ENCODE measurements at regions of chr1 and their contacts with region 1.

Region 1: DNA sequence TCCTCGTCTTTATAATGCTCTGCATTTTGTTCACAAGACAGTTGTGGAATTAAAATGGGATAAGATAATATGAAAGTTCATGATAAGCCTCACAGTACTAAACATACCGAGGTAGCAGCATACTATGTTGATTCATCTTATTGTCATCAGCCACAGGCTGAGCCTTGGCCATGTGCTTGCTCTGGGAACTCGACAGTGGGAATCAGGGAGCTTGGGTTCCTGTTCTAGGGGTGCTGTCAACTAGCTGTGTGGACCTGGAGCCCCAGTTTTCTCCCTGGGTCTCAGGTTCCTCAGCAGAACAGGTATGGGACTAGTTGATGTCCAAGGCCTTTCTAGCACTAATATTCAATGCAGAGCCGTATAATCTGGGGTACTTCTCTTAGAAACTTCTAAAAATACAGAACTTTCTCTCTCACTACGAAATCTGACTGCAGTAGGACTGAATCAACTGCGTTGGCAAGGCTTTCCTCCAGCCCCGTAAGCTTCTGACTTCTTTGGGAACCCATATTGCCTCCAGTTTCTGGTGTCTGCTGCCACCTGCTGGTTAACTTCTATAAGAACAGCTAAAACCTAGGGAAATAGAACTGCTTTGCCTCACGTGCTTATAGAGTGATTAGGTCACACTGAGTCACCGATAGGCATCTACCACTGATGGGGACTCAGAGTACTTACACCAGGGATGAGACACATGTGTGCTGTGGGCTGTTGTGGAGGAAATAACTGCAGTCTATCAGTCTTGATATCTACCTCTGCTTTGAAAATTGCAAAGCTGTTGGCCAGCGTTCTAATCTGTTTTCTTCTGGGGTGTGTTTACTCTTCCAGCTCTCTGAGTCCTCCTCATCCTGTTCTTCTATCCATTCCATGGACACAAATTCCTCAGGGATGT is 110.9 kb downstream of the RGL1 start:
- DNase-seq: peak; percentile 83
- H3K4me3 Mint-ChIP-seq: no peak overlapping the region
- H3K27ac Mint-ChIP-seq: peak overlapping the region; percentile 46
- H3K4me1 Mint-ChIP-seq: peaks cover 13% of the 10 kb centered on the region
- H3K27me3 Mint-ChIP-seq: no peaks in the 10 kb centered on the region

Region 2: GRCh38 chr1:183635606-183636333 is 280.1 kb before region 1 on chr1 and contains the start of gene ARPC5:
- CTCF ChIA-PET with region 1: interaction called, 13 read pairs
- POLR2A ChIA-PET with region 1: interaction called, 4 read pairs
- intact Hi-C with region 1: loop called (anchors 1 kb)
- DNase-seq: peak; percentile 98
- H3K4me3 Mint-ChIP-seq: peak within 1 kb of the TSS; percentile 95
- H3K27ac Mint-ChIP-seq: peak within 1 kb of the TSS; percentile 99
- H3K4me1 Mint-ChIP-seq: peaks cover 33% of the 10 kb centered on the region
- H3K27me3 Mint-ChIP-seq: no peaks in the 10 kb centered on the region
- total RNA-seq, gene ARPC5: 158 to 161 TPM

Region 3: GRCh38 chr1:183685112-183685713 is 230.7 kb before region 1 on chr1:
- CTCF ChIA-PET with region 1: interaction called, 42 read pairs
- POLR2A ChIA-PET with region 1: no interaction called
- intact Hi-C with region 1: loop called (anchors 1 kb)
- DNase-seq: peak; percentile 23
- H3K4me3 Mint-ChIP-seq: no peak overlapping the region
- H3K27ac Mint-ChIP-seq: no peak overlapping the region
- H3K4me1 Mint-ChIP-seq: peaks cover 2% of the 10 kb centered on the region
- H3K27me3 Mint-ChIP-seq: peaks cover 3% of the 10 kb centered on the region

Region 4: DNA sequence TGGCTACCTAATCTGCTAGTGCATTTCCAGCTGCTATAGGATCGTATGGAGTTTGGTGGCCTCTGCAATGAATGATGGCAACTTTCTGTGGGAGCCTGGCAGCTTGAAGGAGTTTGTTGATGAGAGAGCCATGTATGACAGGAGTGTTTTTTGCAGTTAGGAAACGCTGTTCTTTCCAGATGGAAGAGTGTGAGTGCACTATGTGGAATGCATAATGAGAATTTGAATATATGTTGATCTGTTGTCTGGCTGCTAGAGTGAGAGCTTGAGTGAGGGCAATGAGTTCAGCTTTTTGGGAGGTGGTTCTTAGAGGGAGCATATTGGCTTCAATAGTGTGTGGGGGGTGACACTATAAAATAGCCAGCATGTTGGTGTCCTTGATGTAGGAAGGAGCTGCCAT is 211.7 kb before region 1 on chr1:
- CTCF ChIA-PET with region 1: no interaction called
- POLR2A ChIA-PET with region 1: no interaction called
- intact Hi-C with region 1: no loop called
- DNase-seq: no peak
- H3K4me3 Mint-ChIP-seq: no peak overlapping the region
- H3K27ac Mint-ChIP-seq: no peak overlapping the region
- H3K4me1 Mint-ChIP-seq: no peaks in the 10 kb centered on the region
- H3K27me3 Mint-ChIP-seq: no peaks in the 10 kb centered on the region

Region 5: GRCh38 chr1:183841950-183842794 is 73.7 kb before region 1 on chr1:
- CTCF ChIA-PET with region 1: interaction called, 8 read pairs
- POLR2A ChIA-PET with region 1: interaction called, 3 read pairs
- intact Hi-C with region 1: loop called (anchors 1 kb)
- DNase-seq: peak; percentile 51
- H3K4me3 Mint-ChIP-seq: peak overlapping the region; percentile 40
- H3K27ac Mint-ChIP-seq: peak overlapping the region; percentile 66
- H3K4me1 Mint-ChIP-seq: peaks cover 25% of the 10 kb centered on the region
- H3K27me3 Mint-ChIP-seq: no peaks in the 10 kb centered on the region

Region 6: DNA sequence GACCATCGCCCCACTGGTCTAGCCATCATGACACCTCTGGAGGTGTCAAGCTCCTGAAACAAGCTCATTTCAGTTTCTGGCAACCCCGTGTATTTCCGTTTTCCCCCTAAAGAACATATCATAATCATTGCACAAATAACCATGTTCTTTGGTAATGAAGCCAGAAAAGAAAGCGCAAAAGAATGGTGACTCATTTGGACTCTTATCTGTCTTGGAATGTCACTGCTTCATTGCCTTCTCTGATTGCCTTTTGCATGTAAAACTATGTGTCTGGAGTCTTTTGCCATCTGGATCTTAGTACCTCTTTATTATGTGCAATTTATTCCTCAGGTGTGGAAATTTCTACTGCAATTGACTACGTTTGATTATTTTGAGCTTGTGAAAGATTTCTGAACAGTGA is 11.1 kb after region 1 on chr1:
- CTCF ChIA-PET with region 1: interaction called, 14 read pairs
- POLR2A ChIA-PET with region 1: no interaction called
- intact Hi-C with region 1: no loop called
- DNase-seq: no peak
- H3K4me3 Mint-ChIP-seq: no peak overlapping the region
- H3K27ac Mint-ChIP-seq: no peak overlapping the region
- H3K4me1 Mint-ChIP-seq: no peaks in the 10 kb centered on the region
- H3K27me3 Mint-ChIP-seq: no peaks in the 10 kb centered on the region

Region 7: DNA sequence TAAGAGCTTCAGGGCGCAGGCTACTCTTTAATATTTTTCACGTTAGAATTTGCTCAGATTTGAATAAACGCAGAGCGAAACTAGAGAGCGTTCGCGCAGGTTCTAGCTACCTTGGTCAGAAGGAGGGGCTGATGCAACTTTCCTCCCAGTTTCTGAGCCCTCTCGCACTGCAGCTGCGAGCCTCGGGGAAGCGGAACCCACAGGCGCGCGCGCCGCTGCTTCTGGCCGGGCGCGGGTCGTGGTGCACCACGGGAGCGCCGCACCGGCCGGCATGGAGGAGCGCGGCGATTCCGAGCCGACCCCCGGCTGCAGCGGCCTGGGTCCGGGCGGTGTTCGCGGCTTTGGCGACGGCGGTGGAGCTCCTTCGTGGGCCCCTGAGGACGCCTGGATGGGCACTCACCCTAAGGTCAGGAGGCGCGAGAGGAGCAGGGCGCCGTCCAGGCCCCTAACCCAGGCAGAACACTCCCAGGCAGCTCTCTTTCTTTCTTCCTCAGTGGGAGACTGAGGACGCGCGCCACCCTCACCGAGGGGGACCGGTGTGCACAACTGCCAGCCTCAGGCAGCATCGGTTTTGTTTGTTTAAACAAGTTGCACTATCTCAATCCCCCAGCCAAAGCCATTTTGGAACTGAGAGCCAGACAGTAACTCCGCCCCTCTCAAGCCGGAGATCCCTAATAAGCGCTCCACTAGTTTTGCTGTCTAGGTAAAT is 135.8 kb after region 1 on chr1 and contains the start of gene TSEN15:
- CTCF ChIA-PET with region 1: interaction called, 10 read pairs
- POLR2A ChIA-PET with region 1: no interaction called
- intact Hi-C with region 1: loop called (anchors 2 kb)
- DNase-seq: peak; percentile 85
- H3K4me3 Mint-ChIP-seq: peak within 1 kb of the TSS; percentile 98
- H3K27ac Mint-ChIP-seq: peak within 1 kb of the TSS; percentile 96
- H3K4me1 Mint-ChIP-seq: peaks cover 33% of the 10 kb centered on the region
- H3K27me3 Mint-ChIP-seq: peaks cover 6% of the 10 kb centered on the region
- total RNA-seq, gene TSEN15: 44.1 to 44.3 TPM

Region 8: GRCh38 chr1:184340984-184341383 is 425.1 kb after region 1 on chr1:
- CTCF ChIA-PET with region 1: no interaction called
- POLR2A ChIA-PET with region 1: no interaction called
- intact Hi-C with region 1: no loop called
- DNase-seq: no peak
- H3K4me3 Mint-ChIP-seq: no peak overlapping the region
- H3K27ac Mint-ChIP-seq: no peak overlapping the region
- H3K4me1 Mint-ChIP-seq: no peaks in the 10 kb centered on the region
- H3K27me3 Mint-ChIP-seq: peaks cover 6% of the 10 kb centered on the region

Measured in activated CD4-positive, alpha-beta memory T cell treated with anti-CD3 and anti-CD28 coated beads for 36 hours (primary cell).